ENCODE measurements at regions of chrX and their contacts with region 1.

Region 1: GRCh38 chrX:48981178-48981577 is 9.5 kb upstream of the KCND1 start:
- DNase-seq: no peak
- ATAC-seq: no peak
- H3K4me3 Mint-ChIP-seq: no peak overlapping the region
- H3K27ac Mint-ChIP-seq: no peak overlapping the region
- H3K4me1 Mint-ChIP-seq: no peaks in the 10 kb centered on the region
- H3K27me3 Mint-ChIP-seq: no peaks in the 10 kb centered on the region
- CTCF ChIP-seq: no peak

Region 2: DNA sequence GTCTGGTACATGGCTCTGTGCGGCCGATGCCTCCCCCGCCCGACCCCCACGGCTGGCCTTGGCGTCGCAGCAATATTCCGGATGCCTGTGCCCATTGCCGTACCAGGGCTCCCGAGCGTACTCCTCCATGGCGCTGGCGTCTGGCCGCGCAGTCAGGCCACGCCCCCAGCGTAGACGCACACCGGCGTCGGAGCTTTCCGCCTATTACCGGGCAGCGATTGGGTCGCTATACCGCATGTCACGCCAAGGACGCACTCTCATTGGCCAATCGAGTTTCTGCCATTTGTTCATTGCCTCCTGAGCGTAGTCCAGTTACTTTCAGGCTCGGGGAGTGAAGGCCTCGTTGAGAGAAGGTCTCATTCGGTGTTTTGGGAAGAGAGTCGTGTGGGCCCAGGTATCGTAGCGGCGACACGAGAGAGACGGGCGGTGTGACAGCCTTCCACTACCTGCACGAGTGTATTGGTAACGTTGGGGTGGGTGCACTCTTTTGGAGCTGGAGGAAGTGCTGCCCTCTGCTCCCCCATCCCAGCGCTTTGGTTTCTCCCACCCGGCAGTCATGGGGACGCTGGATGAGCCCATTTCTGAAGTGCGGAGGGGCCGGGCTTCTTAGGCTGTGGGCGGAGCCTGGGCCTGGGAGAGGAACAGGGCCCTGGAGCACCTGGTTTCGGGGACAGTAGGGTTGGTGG is 83.4 kb before region 1 on chrX and contains the starts of genes PQBP1 and TIMM17B:
- CTCF ChIA-PET with region 1: no interaction called
- POLR2A ChIA-PET with region 1: no interaction called
- DNase-seq: peak; percentile 85
- ATAC-seq: peak; percentile 93
- H3K4me3 Mint-ChIP-seq: peak within 1 kb of the TSS; percentile 85
- H3K27ac Mint-ChIP-seq: peak within 1 kb of the TSS; percentile 100
- H3K4me1 Mint-ChIP-seq: 0 out of 2 replicates have a peak, but pooled peaks cover 8% of the 10 kb centered on the region
- H3K27me3 Mint-ChIP-seq: no peaks in the 10 kb centered on the region
- CTCF ChIP-seq: no peak
- total RNA-seq, gene PQBP1: 79.4 to 81.2 TPM (median 81.2 TPM) in 3 replicates
- total RNA-seq, gene TIMM17B: 99.6 to 120 TPM (median 114 TPM) in 3 replicates

Region 3: DNA sequence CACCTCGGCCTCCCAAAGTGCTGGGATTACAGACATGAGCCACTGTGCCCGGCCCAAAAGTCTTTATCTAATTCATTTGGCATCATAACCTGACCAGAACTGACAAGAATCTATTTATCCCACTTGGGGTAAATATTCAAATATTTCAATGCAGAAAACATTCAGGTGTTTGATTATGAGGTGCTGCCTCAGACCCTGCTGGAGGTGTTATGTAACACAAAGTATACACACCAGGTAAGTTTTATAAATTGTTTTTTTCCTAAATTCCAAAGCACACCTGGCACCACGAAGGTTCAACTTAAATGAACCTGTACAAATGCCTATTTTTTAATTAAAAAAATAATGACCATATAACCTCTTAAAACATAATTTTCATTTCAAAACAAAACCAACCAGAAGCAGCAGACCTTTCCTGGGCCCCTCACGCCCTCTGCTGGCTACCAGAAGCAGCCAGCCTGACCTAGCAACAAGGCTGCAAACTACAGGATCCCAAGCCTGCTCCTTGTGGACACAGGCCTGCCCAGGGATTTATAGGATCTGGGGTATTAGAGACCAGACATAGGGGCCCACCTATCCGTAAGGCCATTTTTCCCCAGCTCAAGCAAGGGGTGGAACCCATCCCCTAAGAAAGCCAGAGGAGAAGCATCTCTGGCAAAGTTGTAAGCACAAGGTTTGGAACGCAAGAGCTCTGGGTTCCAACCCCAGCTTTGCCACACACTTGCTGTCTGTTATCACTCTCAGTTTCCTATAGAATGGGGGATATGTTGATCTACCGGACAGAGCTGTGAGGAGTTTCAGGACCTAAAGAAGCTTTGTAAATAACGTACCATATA is 35.4 kb before region 1 on chrX:
- CTCF ChIA-PET with region 1: no interaction called
- POLR2A ChIA-PET with region 1: interaction called, 16 read pairs
- DNase-seq: peak; percentile 49
- ATAC-seq: peak; percentile 97
- H3K4me3 Mint-ChIP-seq: no peak overlapping the region
- H3K27ac Mint-ChIP-seq: peak overlapping the region; percentile 89
- H3K4me1 Mint-ChIP-seq: peaks cover 17% of the 10 kb centered on the region
- H3K27me3 Mint-ChIP-seq: no peaks in the 10 kb centered on the region
- CTCF ChIP-seq: no peak

Region 4: GRCh38 chrX:48957827-48958634 is 23.1 kb before region 1 on chrX:
- CTCF ChIA-PET with region 1: no interaction called
- POLR2A ChIA-PET with region 1: no interaction called
- DNase-seq: peak; percentile 93
- ATAC-seq: peak; percentile 95
- H3K4me3 Mint-ChIP-seq: peak overlapping the region; percentile 99
- H3K27ac Mint-ChIP-seq: peak overlapping the region; percentile 100
- H3K4me1 Mint-ChIP-seq: peaks cover 11% of the 10 kb centered on the region; the same call in 1 of the 2 replicates
- H3K27me3 Mint-ChIP-seq: no peaks in the 10 kb centered on the region
- CTCF ChIP-seq: no peak

Measured in WTC11 (cell line).